Gastrocnemius medialis (tissue), 4 donors: ENCODE measurements at regions of chr13 and their contacts with region 1.

Region 1: GRCh38 chr13:52617070-52618060 is 24.9 kb upstream of the HNRNPA1L2 start:
- DNase-seq: peak; percentile 42 to 71
- ATAC-seq: peak; percentile 88 to 96
- H3K4me3 ChIP-seq: peak overlapping the region; percentile 67 to 99 (median 74)
- H3K27ac ChIP-seq: peak overlapping the region; percentile 69 to 90 (median 76)
- H3K4me1 ChIP-seq: peaks cover 3 to 6% of the 10 kb centered on the region in 2 donors
- H3K27me3 ChIP-seq: no peaks in the 10 kb centered on the region
- CTCF ChIP-seq: no peak
- POLR2A ChIP-seq: peak in 1 of 2 donors; percentile 11

Region 2: GRCh38 chr13:52599848-52600603 is 17.3 kb before region 1 on chr13:
- in situ Hi-C with region 1: no loop called
- intact Hi-C with region 1: loop called (anchors 1 kb)
- DNase-seq: peak in 1 of 2 donors; percentile 23
- ATAC-seq: peak; percentile 60 to 72
- H3K4me3 ChIP-seq: peak overlapping the region; percentile 71 to 97 (median 80)
- H3K27ac ChIP-seq: peak overlapping the region; percentile 67 to 87 (median 72)
- H3K4me1 ChIP-seq: peaks cover 7 to 13% of the 10 kb centered on the region in 2 donors
- H3K27me3 ChIP-seq: no peaks in the 10 kb centered on the region
- CTCF ChIP-seq: no peak
- POLR2A ChIP-seq: no peak

Region 3: DNA sequence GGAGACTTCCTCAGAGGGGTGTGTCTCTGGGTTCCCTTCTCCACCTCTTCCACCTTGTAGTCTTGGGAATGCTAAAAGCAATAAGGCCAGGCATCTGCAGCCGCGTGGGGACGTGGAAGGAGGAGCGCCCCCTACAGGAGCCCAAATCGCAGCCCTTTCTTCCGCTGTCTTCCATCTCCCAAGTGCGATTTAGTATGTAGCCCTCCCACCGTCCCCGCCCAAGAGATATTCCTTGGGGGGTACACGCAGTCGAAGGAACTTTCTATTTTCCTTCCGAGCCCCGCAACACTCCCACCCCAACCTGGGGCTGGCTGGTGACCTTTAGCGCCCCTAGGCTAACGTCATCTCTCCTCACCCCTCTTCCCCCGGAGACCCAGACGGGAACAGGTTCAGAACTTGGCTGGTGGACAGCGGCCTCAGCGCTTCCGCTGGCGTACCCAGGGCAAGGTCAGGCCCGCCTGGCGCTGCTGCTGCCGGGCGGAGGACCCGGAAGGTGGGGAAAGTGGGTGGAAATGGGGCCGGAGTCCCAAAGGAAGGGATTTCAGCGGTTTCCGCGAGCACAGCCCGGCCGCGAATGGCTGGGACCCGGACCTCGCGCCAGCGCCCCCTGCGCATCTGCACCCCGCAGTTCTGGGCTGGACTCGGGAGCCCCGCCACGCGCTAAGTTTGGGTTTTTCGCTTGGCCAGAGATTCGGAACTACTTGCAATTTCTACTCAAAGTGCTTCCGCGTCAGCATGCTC is 233.2 kb after region 1 on chr13:
- in situ Hi-C with region 1: no loop called
- intact Hi-C with region 1: no loop called
- DNase-seq: peak in 1 of 2 donors; percentile 20
- ATAC-seq: no peak
- H3K4me3 ChIP-seq: peak overlapping the region; percentile 61 to 83 (median 63)
- H3K27ac ChIP-seq: no peak overlapping the region
- H3K4me1 ChIP-seq: peaks cover 8 to 15% of the 10 kb centered on the region in 2 donors
- H3K27me3 ChIP-seq: peaks cover 56 to 68% (median 57%) of the 10 kb centered on the region in 3 donors
- CTCF ChIP-seq: no peak
- POLR2A ChIP-seq: no peak

Region 4: GRCh38 chr13:52931539-52932431 is 314.4 kb after region 1 on chr13:
- in situ Hi-C with region 1: no loop called
- intact Hi-C with region 1: no loop called
- DNase-seq: no peak
- ATAC-seq: no peak
- H3K4me3 ChIP-seq: no peak overlapping the region
- H3K27ac ChIP-seq: no peak overlapping the region
- H3K4me1 ChIP-seq: no peaks in the 10 kb centered on the region
- H3K27me3 ChIP-seq: no peaks in the 10 kb centered on the region
- CTCF ChIP-seq: no peak
- POLR2A ChIP-seq: no peak